PC-9 (cell line): ENCODE measurements at regions of chr1 and their contacts with region 1.

Region 1: DNA sequence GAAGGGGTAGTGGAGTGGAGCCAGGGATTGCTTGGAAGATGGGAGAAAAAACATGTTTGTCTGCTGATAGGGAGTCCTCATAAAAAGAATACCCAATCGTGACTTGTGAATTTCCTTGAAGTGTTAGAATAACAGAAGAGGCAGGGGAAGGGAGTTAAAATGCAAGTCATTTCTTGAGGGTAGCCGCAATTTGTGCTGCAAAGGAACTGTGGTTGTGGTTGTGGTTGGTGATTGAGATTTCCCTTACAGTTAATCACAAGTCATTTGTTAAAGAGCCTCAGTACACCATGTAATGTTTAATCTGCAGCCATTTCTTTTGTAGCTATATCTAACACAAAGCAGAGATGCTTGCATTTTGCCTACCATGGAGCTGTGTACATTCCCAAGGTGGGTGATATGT is 38.5 kb upstream of the EGLN1 start:
- DNase-seq: no peak
- H3K4me3 ChIP-seq: no peak overlapping the region
- H3K27ac ChIP-seq: no peak overlapping the region
- H3K4me1 ChIP-seq: no peaks in the 10 kb centered on the region
- H3K27me3 ChIP-seq: no peaks in the 10 kb centered on the region
- CTCF ChIP-seq: no peak

Region 2: DNA sequence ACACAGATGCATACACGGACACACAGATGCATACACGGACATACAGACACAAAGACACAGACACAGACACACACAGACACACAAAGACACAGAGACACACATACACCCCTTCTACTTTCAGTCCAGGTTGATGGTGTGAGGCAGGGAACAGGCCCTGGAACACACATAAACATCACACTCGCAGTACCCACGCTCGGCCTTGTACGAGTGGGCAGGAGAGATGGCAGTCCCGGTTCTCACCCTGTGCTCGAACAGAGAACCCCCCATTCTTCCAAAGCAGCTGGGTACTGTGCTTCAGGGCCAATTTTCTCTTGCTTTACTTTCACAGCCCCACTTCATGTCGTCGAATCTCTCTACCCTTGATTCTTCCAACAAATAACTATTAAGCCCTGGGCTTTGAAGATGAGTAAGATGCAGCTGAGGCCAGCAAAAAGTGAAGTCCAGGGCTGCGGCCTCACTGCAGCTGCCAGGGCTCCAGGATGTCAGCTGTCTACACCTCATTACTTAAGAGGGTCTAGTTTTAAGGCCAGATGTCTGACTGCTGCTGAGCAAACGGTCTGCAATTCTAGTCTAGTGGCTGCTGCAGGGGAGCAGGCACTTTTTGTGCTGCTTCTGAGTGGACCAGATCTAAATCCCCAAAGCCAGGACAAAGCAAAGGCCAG is 1124.6 kb before region 1 on chr1:
- CTCF ChIA-PET with region 1: no interaction called
- POLR2A ChIA-PET with region 1: no interaction called
- intact Hi-C with region 1: no loop called
- DNase-seq: no peak
- H3K4me3 ChIP-seq: no peak overlapping the region
- H3K27ac ChIP-seq: no peak overlapping the region
- H3K4me1 ChIP-seq: no peaks in the 10 kb centered on the region
- H3K27me3 ChIP-seq: peaks cover 53% of the 10 kb centered on the region
- CTCF ChIP-seq: no peak

Region 3: DNA sequence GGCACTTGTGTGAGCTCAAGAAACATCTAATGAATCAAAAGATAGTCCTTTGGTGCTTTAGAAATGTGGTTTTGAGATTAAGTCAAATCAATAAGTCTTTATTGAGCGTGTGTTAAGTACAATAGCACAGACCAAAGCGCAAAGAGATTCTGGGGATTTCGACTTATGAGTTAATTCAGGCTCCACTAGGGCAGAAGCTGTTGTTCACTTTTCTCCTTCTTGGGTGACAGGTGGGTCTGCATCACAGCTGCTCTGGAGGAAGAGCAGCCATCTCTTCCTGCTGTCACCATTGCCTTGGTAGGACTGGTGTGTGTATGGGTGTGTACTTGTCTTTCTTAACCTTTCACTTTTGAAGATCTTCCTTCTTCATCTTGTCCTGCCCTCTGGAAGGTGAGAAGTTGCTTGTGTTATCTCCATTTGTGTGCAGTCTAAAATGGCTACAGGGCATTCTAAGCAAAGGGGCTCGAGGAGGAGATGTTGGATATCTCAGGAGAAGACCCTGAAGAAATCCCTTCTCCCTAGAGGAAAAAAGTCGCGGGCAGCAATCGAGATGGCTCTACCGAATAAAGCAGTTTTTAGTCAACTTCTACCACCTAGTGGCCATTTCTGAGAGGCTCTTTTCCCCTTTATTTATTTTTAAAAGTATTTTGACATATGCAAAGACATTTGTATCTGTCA is 143.1 kb after region 1 on chr1:
- CTCF ChIA-PET with region 1: interaction called, 10 read pairs
- POLR2A ChIA-PET with region 1: no interaction called
- intact Hi-C with region 1: no loop called
- DNase-seq: peak; percentile 40 to 53
- H3K4me3 ChIP-seq: peak overlapping the region; percentile 66
- H3K27ac ChIP-seq: no peak overlapping the region
- H3K4me1 ChIP-seq: peaks cover 12% of the 10 kb centered on the region
- H3K27me3 ChIP-seq: no peaks in the 10 kb centered on the region
- CTCF ChIP-seq: peak; percentile 83